ENCODE measurements at regions of chr11 and their contacts with region 1.

Region 1: DNA sequence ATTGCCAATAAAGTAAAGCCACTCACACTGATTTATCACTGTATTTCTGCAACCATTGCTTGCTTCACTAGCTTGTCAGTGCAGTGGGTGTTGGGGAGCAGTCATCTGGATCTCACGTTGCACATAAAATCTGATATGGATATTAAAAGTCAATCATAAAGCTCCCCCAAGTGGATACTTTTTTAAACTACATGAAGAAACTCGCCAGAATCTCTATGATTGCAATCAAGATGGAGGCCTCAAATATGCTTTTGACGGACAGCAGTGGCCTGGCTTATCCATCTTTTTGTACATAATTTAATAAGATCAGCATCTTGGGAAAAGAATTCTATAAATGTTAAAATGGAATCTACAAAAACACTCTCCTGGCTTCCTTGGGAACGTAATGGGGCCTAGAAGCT is 137.7 kb downstream of the WT1 start:
- H3K4me3 ChIP-seq: no peak overlapping the region
- H3K27ac ChIP-seq: no peak overlapping the region
- H3K4me1 ChIP-seq: no peaks in the 10 kb centered on the region
- CTCF ChIP-seq: no peak

Region 2: DNA sequence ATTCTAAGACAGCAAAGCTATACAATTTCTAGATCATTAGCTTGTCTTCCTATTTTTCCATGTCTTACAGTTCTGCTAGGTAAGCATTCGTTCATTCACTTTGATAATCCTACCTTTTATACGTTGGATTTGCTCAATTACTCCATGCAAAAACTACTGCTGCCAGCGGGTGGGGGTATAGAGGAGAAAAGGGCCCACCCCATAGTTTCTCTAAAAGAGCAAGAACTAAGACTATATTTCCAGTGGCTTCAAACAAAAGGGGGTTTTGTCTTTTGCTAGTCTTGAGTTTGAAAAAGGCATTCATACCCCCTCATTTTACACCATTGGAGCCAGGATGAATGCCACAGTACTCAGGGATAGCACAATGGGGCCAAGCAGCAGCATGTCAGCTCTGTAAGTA is 17.9 kb before region 1 on chr11:
- CTCF ChIA-PET with region 1: interaction called, 14 read pairs
- POLR2A ChIA-PET with region 1: interaction called, 4 read pairs
- H3K4me3 ChIP-seq: no peak overlapping the region
- H3K27ac ChIP-seq: no peak overlapping the region
- H3K4me1 ChIP-seq: no peaks in the 10 kb centered on the region
- CTCF ChIP-seq: no peak

Measured in HEK293 (cell line).